Spleen (tissue), 13 donors: ENCODE measurements at regions of chr7 and their contacts with region 1.

Region 1: GRCh38 chr7:32204361-32205018 is 134.3 kb upstream of the PDE1C start:
- DNase-seq: no peak
- H3K4me3 ChIP-seq: peak overlapping the region in 1 of 8 donors; percentile 32
- H3K27ac ChIP-seq: no peak overlapping the region
- H3K4me1 ChIP-seq: no peaks in the 10 kb centered on the region
- H3K27me3 ChIP-seq: peaks cover 0 to 5% (median 0%) of the 10 kb centered on the region in 7 donors
- CTCF ChIP-seq: peak in 10 of 11 experiments; percentile 40 to 72 (median 59)
- POLR2A ChIP-seq: no peak

Region 2: DNA sequence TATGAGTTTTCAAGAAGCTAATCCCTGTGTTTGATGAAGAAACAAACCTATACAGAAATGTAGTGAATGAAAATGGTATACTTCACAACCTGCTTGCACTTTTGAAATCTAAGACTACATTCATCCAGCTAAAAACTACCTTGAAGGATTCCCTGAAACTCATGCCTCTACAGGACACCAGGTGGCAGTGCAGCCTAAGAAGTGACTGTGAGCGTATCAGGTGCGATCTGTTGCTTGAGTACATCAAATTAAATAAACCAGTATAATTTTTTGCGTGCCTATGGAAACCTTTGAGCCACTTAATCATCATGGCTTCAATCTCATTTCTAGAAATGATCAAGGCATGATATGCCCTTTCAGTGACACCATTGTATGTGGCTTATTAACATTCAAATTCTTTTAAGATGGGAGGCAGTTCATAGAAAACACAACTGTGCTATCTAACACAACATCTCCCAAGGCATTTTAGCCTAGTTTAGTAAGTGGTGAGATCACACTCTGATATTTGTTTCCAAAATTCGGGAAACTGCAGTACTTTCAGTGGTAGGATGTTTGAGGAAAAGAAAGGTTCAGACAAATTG is 460.1 kb before region 1 on chr7:
- intact Hi-C with region 1: loop called (anchors 5 kb)
- DNase-seq: no peak
- H3K4me3 ChIP-seq: no peak overlapping the region
- H3K27ac ChIP-seq: no peak overlapping the region
- H3K4me1 ChIP-seq: no peaks in the 10 kb centered on the region
- H3K27me3 ChIP-seq: peaks cover 0 to 12% (median 0%) of the 10 kb centered on the region in 7 donors
- CTCF ChIP-seq: peak; percentile 28 to 84 (median 73)
- POLR2A ChIP-seq: no peak

Region 3: GRCh38 chr7:32062150-32062549 is 142.3 kb before region 1 on chr7:
- intact Hi-C with region 1: loop called (anchors 10 kb)
- DNase-seq: no peak
- H3K4me3 ChIP-seq: no peak overlapping the region
- H3K27ac ChIP-seq: no peak overlapping the region
- H3K4me1 ChIP-seq: no peaks in the 10 kb centered on the region
- H3K27me3 ChIP-seq: peaks cover 0 to 3% (median 0%) of the 10 kb centered on the region in 7 donors
- CTCF ChIP-seq: peak in 6 of 11 experiments; percentile 17 to 54 (median 40)
- POLR2A ChIP-seq: no peak

Region 4: DNA sequence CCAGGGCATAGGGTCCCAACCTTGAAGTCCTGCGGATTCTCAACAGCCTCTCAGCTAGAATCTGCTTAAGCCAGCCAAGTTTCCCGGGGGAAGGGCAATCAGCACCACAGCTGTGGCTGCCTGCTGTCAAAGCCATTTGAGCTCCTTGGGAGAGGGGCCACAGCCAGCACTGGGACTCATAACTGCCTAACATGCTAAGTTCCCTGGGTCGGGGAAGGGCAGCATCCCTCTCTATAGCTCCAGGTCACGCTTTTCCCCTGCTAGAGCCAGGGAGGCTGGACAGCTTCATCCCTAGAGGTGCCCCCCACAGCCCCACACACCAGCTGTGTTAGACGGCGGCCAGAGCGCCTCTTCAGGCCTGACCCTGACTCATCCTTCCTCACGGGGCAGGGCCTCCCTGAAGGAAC is 84.7 kb before region 1 on chr7:
- intact Hi-C with region 1: no loop called
- DNase-seq: no peak
- H3K4me3 ChIP-seq: no peak overlapping the region
- H3K27ac ChIP-seq: no peak overlapping the region
- H3K4me1 ChIP-seq: no peaks in the 10 kb centered on the region
- H3K27me3 ChIP-seq: no peaks in the 10 kb centered on the region
- CTCF ChIP-seq: no peak
- POLR2A ChIP-seq: no peak

Region 5: GRCh38 chr7:32335107-32335506 is 130.6 kb after region 1 on chr7:
- intact Hi-C with region 1: no loop called
- DNase-seq: no peak
- H3K4me3 ChIP-seq: no peak overlapping the region
- H3K27ac ChIP-seq: no peak overlapping the region
- H3K4me1 ChIP-seq: no peaks in the 10 kb centered on the region
- H3K27me3 ChIP-seq: peaks cover 0 to 5% (median 0%) of the 10 kb centered on the region in 7 donors
- CTCF ChIP-seq: no peak
- POLR2A ChIP-seq: no peak